PC-9 (cell line): ENCODE measurements at regions of chr5 and their contacts with region 1.

Region 1: DNA sequence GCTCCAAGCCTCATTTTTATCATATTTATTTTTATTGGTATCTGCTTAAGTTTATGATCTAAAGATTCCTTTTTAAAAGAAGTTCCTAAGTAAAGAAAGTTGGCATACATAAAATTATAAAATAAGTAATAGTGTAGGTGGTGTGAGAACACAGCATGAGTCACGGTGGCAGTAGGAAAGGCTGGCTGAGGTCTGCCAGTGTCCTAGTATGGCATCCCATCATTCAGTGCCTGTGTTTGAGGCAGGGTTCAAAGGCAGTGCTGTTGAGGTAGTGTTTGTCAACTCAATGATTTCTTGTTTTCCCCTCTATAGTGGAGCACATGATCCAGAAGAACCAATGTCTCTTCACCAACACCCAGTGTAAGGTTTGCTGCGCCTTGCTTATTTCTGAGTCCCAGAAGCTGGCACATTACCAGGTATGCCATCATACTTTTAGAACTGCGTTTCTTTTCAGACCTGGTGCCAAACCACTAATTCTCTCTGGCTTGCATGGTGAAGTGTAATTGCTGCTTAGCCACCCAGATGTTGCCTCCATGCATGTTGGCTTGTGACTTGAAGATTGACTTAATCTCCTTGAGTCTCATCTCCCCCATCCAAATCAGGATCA is 18.4 kb downstream of the ZNF346 start:
- DNase-seq: no peak
- H3K4me3 ChIP-seq: no peak overlapping the region
- H3K27ac ChIP-seq: no peak overlapping the region
- H3K4me1 ChIP-seq: no peaks in the 10 kb centered on the region
- H3K27me3 ChIP-seq: no peaks in the 10 kb centered on the region
- CTCF ChIP-seq: no peak

Region 2: DNA sequence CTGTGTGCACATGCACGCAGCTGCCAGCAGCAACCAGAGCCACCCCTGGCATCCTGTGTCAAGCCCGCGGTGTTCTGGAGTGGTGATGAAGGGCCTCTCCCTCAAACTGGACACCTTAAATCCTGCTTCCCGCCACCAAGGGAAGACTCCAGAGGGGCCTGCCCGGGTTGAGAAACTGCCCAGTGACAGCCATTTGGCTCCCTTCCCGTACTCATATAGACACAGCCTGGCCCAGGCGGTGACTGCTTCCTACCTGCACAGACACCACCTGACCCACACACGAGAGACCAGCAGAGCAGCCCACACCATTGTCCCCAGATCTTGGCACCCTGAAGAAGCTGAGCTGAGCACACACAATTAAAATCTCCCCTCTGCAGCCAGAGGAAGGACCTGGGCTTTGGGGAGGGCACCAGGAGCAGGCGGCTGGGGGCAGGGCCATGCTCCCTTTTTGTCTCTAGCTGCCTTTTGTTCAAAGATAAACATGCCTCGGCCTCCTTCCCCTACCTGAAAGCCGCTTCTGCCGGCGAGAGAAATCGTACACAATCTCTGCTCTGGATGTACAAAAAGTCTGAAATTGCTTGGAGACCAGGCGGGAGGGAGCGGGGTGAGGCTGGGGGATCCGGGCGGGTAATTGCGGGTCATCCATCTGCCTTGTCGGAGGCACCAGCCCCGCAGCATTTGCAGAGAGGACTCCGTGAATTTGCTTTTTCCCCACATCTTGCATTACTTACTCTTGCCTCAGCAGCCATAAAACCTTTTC is 315.2 kb before region 1 on chr5:
- CTCF ChIA-PET with region 1: no interaction called
- POLR2A ChIA-PET with region 1: no interaction called
- intact Hi-C with region 1: no loop called
- DNase-seq: no peak
- H3K4me3 ChIP-seq: no peak overlapping the region
- H3K27ac ChIP-seq: no peak overlapping the region
- H3K4me1 ChIP-seq: no peaks in the 10 kb centered on the region
- H3K27me3 ChIP-seq: peaks cover 42% of the 10 kb centered on the region
- CTCF ChIP-seq: no peak

Region 3: GRCh38 chr5:176774216-176775170 is 266.4 kb before region 1 on chr5:
- CTCF ChIA-PET with region 1: no interaction called
- POLR2A ChIA-PET with region 1: no interaction called
- intact Hi-C with region 1: no loop called
- DNase-seq: no peak
- H3K4me3 ChIP-seq: no peak overlapping the region
- H3K27ac ChIP-seq: no peak overlapping the region
- H3K4me1 ChIP-seq: no peaks in the 10 kb centered on the region
- H3K27me3 ChIP-seq: 0 out of 2 replicates have a peak, but pooled peaks cover 3% of the 10 kb centered on the region
- CTCF ChIP-seq: no peak

Region 4: GRCh38 chr5:176817841-176818377 is 223.0 kb before region 1 on chr5:
- CTCF ChIA-PET with region 1: no interaction called
- POLR2A ChIA-PET with region 1: no interaction called
- intact Hi-C with region 1: no loop called
- DNase-seq: peak in 1 of 2 experiments; percentile 58
- H3K4me3 ChIP-seq: peak overlapping the region; percentile 72
- H3K27ac ChIP-seq: no peak overlapping the region
- H3K4me1 ChIP-seq: peaks cover 35% of the 10 kb centered on the region
- H3K27me3 ChIP-seq: no peaks in the 10 kb centered on the region
- CTCF ChIP-seq: peak; percentile 64; the same call in 1 of the 2 replicates

Region 5: DNA sequence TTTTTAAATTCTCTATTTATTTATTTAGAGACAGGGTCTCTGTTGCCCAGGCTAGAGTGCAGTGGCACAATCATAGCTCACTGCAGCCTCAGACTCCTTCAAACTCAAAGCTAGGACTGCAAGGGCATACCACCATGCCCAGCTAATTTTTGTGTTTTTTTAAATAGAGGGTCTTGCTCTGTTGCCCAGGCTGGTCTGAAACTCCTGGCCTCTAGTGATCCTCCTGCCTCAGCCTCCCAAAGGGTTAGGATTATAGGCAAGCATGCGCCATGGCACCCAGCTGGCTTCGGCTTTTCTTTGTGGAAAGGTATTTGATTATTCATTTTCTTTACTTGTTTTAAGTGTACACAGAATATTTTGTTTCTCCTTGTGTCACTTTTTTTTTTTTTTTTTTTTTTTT is 13.3 kb before region 1 on chr5:
- CTCF ChIA-PET with region 1: interaction called, 20 read pairs
- POLR2A ChIA-PET with region 1: no interaction called
- intact Hi-C with region 1: no loop called
- DNase-seq: no peak
- H3K4me3 ChIP-seq: no peak overlapping the region
- H3K27ac ChIP-seq: no peak overlapping the region
- H3K4me1 ChIP-seq: peaks cover 5% of the 10 kb centered on the region
- H3K27me3 ChIP-seq: no peaks in the 10 kb centered on the region
- CTCF ChIP-seq: no peak

Region 6: GRCh38 chr5:177265395-177265794 is 224.5 kb after region 1 on chr5:
- CTCF ChIA-PET with region 1: no interaction called
- POLR2A ChIA-PET with region 1: no interaction called
- intact Hi-C with region 1: loop called (anchors 10 kb)
- DNase-seq: no peak
- H3K4me3 ChIP-seq: no peak overlapping the region
- H3K27ac ChIP-seq: no peak overlapping the region
- H3K4me1 ChIP-seq: no peaks in the 10 kb centered on the region
- H3K27me3 ChIP-seq: no peaks in the 10 kb centered on the region
- CTCF ChIP-seq: no peak